ENCODE measurements at regions of chr5 and their contacts with region 1.

Region 1: DNA sequence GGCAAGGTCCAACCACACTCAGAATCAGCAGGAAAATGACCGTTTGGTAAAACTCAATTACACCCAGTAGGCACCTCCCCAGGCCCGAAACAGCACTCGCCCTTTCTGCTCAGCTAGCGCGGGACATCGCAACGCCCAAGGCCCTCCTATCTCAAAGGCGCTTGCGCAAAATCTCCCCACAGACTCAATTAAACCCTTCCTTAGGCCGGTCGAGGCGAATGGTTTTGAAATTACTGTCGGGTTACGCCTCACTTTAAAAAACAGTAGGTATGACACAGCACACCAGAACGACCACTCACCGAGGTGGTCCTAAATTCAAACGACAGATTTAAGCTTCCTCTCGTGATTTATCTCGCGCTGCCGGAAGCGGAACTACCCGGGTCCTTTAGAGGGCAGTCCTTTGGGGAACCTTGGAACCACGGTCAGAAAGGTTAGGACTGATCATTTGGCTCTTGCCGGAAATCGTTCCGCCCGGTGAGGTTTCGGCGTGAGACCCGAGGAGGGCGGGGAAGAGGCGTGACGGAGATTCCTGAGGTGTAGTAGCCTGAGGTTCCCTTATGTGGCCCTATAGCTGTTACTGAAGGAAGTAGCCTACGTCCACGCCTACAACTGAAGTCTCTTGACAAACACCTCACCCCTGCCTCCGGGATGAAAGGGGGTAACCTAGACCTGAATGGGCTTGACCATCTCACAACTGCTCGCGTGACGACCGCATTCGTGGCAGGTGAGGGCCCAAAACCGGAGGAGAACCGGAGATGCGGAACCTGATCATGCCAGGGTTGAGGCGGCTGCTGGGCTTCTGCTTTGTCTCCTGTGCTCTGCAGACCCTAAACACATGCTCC is at the starts of genes GIN1 and PPIP5K2:
- DNase-seq: peak; percentile 96 to 98 (median 97)
- ATAC-seq: peak; percentile 90
- H3K4me3 ChIP-seq: peak within 1 kb of the TSS; percentile 77 to 83
- H3K4me3 Mint-ChIP-seq: peak within 1 kb of the TSS; percentile 94
- H3K27ac ChIP-seq: peak within 1 kb of the TSS; percentile 85 to 94
- H3K27ac Mint-ChIP-seq: peak within 1 kb of the TSS; percentile 98
- H3K4me1 ChIP-seq: peaks cover 33% of the 10 kb centered on the region
- H3K4me1 Mint-ChIP-seq: peaks cover 53% of the 10 kb centered on the region
- H3K27me3 ChIP-seq: no peaks in the 10 kb centered on the region
- H3K27me3 Mint-ChIP-seq: no peaks in the 10 kb centered on the region
- CTCF ChIP-seq: no peak
- total RNA-seq, gene GIN1: 1.5 to 1.6 TPM
- total RNA-seq, gene PPIP5K2: 43.4 to 51.1 TPM

Region 2: GRCh38 chr5:102498271-102499034 is 621.5 kb before region 1 on chr5 and contains the start of gene SLCO6A1:
- CTCF ChIA-PET with region 1: no interaction called
- POLR2A ChIA-PET with region 1: no interaction called
- intact Hi-C with region 1: no loop called
- DNase-seq: peak in 2 of 9 experiments; percentile 2 to 17
- ATAC-seq: no peak
- H3K4me3 ChIP-seq: no peak within 1 kb of the TSS
- H3K4me3 Mint-ChIP-seq: no peak within 1 kb of the TSS
- H3K27ac ChIP-seq: no peak within 1 kb of the TSS
- H3K27ac Mint-ChIP-seq: no peak within 1 kb of the TSS
- H3K4me1 ChIP-seq: no peaks in the 10 kb centered on the region
- H3K4me1 Mint-ChIP-seq: no peaks in the 10 kb centered on the region
- H3K27me3 ChIP-seq: no peaks in the 10 kb centered on the region
- H3K27me3 Mint-ChIP-seq: no peaks in the 10 kb centered on the region
- CTCF ChIP-seq: no peak
- total RNA-seq, gene SLCO6A1: not detected

Region 3: GRCh38 chr5:102755686-102756371 is 364.2 kb before region 1 on chr5:
- CTCF ChIA-PET with region 1: no interaction called
- POLR2A ChIA-PET with region 1: interaction called, 7 read pairs
- intact Hi-C with region 1: loop called (anchors 1 to 5 kb)
- DNase-seq: peak; percentile 31 to 88 (median 67)
- ATAC-seq: peak; percentile 88
- H3K4me3 ChIP-seq: peak overlapping the region; percentile 77 to 85
- H3K4me3 Mint-ChIP-seq: peak overlapping the region; percentile 91
- H3K27ac ChIP-seq: peak overlapping the region; percentile 60 to 74
- H3K27ac Mint-ChIP-seq: peak overlapping the region; percentile 69
- H3K4me1 ChIP-seq: peaks cover 14% of the 10 kb centered on the region
- H3K4me1 Mint-ChIP-seq: peaks cover 48% of the 10 kb centered on the region
- H3K27me3 ChIP-seq: no peaks in the 10 kb centered on the region
- H3K27me3 Mint-ChIP-seq: peaks cover 9% of the 10 kb centered on the region
- CTCF ChIP-seq: no peak

Region 4: GRCh38 chr5:102911973-102912372 is 208.0 kb before region 1 on chr5:
- CTCF ChIA-PET with region 1: no interaction called
- POLR2A ChIA-PET with region 1: no interaction called
- intact Hi-C with region 1: no loop called
- DNase-seq: no peak
- ATAC-seq: no peak
- H3K4me3 ChIP-seq: no peak overlapping the region
- H3K4me3 Mint-ChIP-seq: no peak overlapping the region
- H3K27ac ChIP-seq: no peak overlapping the region
- H3K27ac Mint-ChIP-seq: no peak overlapping the region
- H3K4me1 ChIP-seq: no peaks in the 10 kb centered on the region
- H3K4me1 Mint-ChIP-seq: no peaks in the 10 kb centered on the region
- H3K27me3 ChIP-seq: no peaks in the 10 kb centered on the region
- H3K27me3 Mint-ChIP-seq: no peaks in the 10 kb centered on the region
- CTCF ChIP-seq: no peak

Region 5: DNA sequence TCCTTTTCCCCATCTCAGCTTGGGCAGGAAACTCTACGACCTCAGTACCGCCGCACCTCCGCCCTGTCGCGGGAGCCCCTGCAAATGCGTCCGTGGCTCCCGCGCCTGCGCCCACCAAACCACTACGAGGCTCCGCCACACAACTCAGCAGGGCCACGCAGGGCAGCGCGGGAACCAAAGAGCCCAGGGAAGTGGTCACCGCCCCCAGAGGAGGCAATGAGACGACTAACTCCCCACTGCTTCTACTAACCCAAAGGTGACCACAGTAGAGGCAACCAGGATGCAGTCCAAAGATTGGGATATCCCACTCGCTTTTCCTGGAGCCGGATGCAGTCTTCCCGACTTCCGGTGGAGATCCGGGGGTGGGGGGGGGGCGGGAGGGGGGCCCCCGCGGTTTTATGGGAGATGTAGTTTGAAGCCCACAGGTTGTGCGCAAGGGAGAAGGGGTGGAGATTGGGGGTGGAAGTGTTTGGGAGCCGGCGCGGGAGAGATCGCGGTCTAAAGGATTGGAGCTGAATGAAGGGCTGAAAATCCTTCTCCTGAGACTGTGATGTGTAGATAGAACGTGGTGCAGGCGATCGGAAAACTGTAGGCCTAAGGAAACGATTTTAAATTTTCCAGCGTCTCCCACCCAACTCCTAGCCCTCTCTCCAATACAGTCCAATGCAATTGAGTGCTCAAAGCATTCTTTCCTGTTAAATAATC is 442.6 kb after region 1 on chr5 and contains the start of gene NUDT12:
- CTCF ChIA-PET with region 1: no interaction called
- POLR2A ChIA-PET with region 1: no interaction called
- intact Hi-C with region 1: loop called in 1 of 2 experiments (anchors 5 kb)
- DNase-seq: peak in 8 of 9 experiments; percentile 7 to 69 (median 44)
- ATAC-seq: peak; percentile 79
- H3K4me3 ChIP-seq: peak within 1 kb of the TSS; percentile 53 to 66
- H3K4me3 Mint-ChIP-seq: peak within 1 kb of the TSS; percentile 94
- H3K27ac ChIP-seq: peak within 1 kb of the TSS in 1 of 2 experiments; percentile 38
- H3K27ac Mint-ChIP-seq: peak within 1 kb of the TSS; percentile 85
- H3K4me1 ChIP-seq: peaks cover 5% of the 10 kb centered on the region
- H3K4me1 Mint-ChIP-seq: peaks cover 20% of the 10 kb centered on the region
- H3K27me3 ChIP-seq: no peaks in the 10 kb centered on the region
- H3K27me3 Mint-ChIP-seq: no peaks in the 10 kb centered on the region
- CTCF ChIP-seq: no peak
- total RNA-seq, gene NUDT12: 0.44 TPM in 1 of 2 experiments, not detected in the other